PC-3 (cell line): ENCODE measurements at regions of chr4 and their contacts with region 1.

Region 1: DNA sequence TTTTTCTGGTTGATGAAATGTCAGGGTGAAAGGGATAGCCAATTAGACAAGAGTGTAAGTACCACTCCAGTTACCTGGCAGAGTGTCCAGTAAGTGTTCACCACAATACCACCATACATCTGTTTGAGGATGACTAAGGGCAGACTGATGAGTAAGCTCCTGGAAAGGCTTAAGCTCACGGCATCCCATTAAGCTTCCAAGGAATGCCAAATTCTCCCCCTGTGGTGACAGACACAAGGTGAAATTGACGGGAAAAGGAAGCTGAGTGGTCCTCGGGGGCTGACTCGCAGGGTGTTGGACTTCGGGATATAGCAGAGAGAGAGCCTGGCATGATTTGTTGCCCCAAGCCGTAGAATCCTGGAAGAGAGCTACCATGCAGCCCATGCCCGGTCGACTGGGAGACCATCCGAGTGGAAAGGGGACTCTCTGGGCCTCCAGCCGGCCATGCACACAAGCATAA is 7.6 kb upstream of the BST1 start:
- DNase-seq: peak; percentile 92
- ATAC-seq: peak; percentile 91
- H3K4me3 ChIP-seq: no peak overlapping the region
- H3K27ac ChIP-seq: peak overlapping the region; percentile 98
- H3K4me1 ChIP-seq: peaks cover 35% of the 10 kb centered on the region
- H3K27me3 ChIP-seq: no peaks in the 10 kb centered on the region
- CTCF ChIP-seq: no peak

Region 2: DNA sequence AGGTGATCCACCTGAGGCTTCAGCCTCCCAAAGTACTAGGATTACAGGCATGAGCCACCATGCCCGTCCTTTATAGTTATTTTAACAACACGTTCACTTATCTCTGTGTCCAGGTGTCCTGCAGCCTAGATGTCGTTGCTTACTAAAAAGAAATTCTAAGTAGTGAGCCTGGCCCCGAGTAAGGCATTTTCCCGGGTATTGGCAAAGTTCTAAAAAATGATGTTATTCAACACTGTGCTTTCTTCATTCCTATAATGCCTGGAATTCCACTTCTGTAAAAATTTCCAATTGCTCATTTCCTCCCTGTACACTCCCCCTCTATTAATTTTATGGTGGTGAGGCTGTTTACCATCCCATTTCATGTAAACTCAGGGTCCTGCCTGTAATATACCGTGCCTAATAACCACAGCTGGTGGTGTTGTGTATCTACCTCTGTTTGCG is 21.8 kb after region 1 on chr4:
- CTCF ChIA-PET with region 1: no interaction called
- POLR2A ChIA-PET with region 1: interaction called, 15 read pairs
- intact Hi-C with region 1: loop called (anchors 2 kb)
- DNase-seq: peak; percentile 30
- ATAC-seq: peak; percentile 87
- H3K4me3 ChIP-seq: no peak overlapping the region
- H3K27ac ChIP-seq: no peak overlapping the region
- H3K4me1 ChIP-seq: peaks cover 9% of the 10 kb centered on the region
- H3K27me3 ChIP-seq: no peaks in the 10 kb centered on the region
- CTCF ChIP-seq: no peak

Region 3: GRCh38 chr4:15784959-15785634 is 89.8 kb after region 1 on chr4:
- CTCF ChIA-PET with region 1: no interaction called
- POLR2A ChIA-PET with region 1: no interaction called
- intact Hi-C with region 1: no loop called
- DNase-seq: no peak
- ATAC-seq: no peak
- H3K4me3 ChIP-seq: no peak overlapping the region
- H3K27ac ChIP-seq: no peak overlapping the region
- H3K4me1 ChIP-seq: no peaks in the 10 kb centered on the region
- H3K27me3 ChIP-seq: no peaks in the 10 kb centered on the region
- CTCF ChIP-seq: no peak

Region 4: GRCh38 chr4:15996773-15997172 is 301.5 kb after region 1 on chr4:
- CTCF ChIA-PET with region 1: no interaction called
- POLR2A ChIA-PET with region 1: no interaction called
- intact Hi-C with region 1: no loop called
- DNase-seq: no peak
- ATAC-seq: no peak
- H3K4me3 ChIP-seq: no peak overlapping the region
- H3K27ac ChIP-seq: no peak overlapping the region
- H3K4me1 ChIP-seq: no peaks in the 10 kb centered on the region
- H3K27me3 ChIP-seq: no peaks in the 10 kb centered on the region
- CTCF ChIP-seq: no peak